ENCODE measurements at regions of chr11 and their contacts with region 1.

Region 1: GRCh38 chr11:1908618-1909017 is 10.9 kb upstream of the TNNT3 start:
- DNase-seq: peak in 1 of 2 donors; percentile 80
- ATAC-seq: peak in 7 of 8 donors; percentile 71 to 90 (median 79)
- H3K4me3 ChIP-seq: peak overlapping the region in 1 of 10 donors; percentile 16
- H3K27ac ChIP-seq: peak overlapping the region; percentile 64 to 88 (median 83)
- H3K4me1 ChIP-seq: peaks cover 3 to 60% (median 49%) of the 10 kb centered on the region in 9 donors
- H3K27me3 ChIP-seq: no peaks in the 10 kb centered on the region
- CTCF ChIP-seq: no peak

Region 2: GRCh38 chr11:1619449-1619848 is 289.2 kb before region 1 on chr11:
- intact Hi-C with region 1: no loop called
- DNase-seq: no peak
- ATAC-seq: peak in 3 of 8 donors; percentile 47 to 81 (median 69)
- H3K4me3 ChIP-seq: no peak overlapping the region
- H3K27ac ChIP-seq: no peak overlapping the region
- H3K4me1 ChIP-seq: no peaks in the 10 kb centered on the region
- H3K27me3 ChIP-seq: peaks cover 0 to 34% (median 20%) of the 10 kb centered on the region in 7 donors
- CTCF ChIP-seq: no peak

Region 3: GRCh38 chr11:1931341-1932099 is 22.9 kb after region 1 on chr11:
- intact Hi-C with region 1: loop called in 4 of 10 experiments (anchors 2 kb)
- DNase-seq: peak in 1 of 2 donors; percentile 58
- ATAC-seq: peak in 7 of 8 donors; percentile 22 to 36 (median 27)
- H3K4me3 ChIP-seq: no peak overlapping the region
- H3K27ac ChIP-seq: peak overlapping the region; percentile 17 to 79 (median 64)
- H3K4me1 ChIP-seq: peaks cover 5 to 46% (median 19%) of the 10 kb centered on the region in 9 donors
- H3K27me3 ChIP-seq: no peaks in the 10 kb centered on the region
- CTCF ChIP-seq: no peak

Region 4: GRCh38 chr11:1936776-1937615 is 28.4 kb after region 1 on chr11:
- intact Hi-C with region 1: loop called in 3 of 10 experiments (anchors 1 to 2 kb)
- DNase-seq: peak in 1 of 2 donors; percentile 11
- ATAC-seq: peak in 1 of 8 donors; percentile 10
- H3K4me3 ChIP-seq: no peak overlapping the region
- H3K27ac ChIP-seq: peak overlapping the region in 1 of 10 donors; percentile 26
- H3K4me1 ChIP-seq: peaks cover 4 to 18% (median 14%) of the 10 kb centered on the region in 9 donors
- H3K27me3 ChIP-seq: no peaks in the 10 kb centered on the region
- CTCF ChIP-seq: no peak

Region 5: DNA sequence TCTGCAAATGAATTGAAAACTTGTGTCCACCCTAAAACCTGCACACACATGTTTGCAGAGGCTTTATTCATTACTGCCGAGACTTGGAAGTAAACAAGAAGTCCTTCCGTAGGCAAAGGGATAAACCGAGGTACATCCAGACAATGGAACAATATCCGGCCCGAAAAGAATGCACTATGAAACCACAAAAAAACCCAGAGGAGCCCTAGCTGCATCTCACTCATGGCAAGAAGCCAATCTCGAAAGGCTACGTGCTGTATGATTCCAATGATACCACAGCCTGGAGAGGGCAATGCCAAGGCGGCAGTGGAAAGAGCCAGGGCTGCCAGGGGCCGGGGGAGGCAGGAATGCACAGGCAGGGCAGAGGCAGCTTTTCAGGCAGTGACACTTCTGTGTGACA is 35.4 kb after region 1 on chr11:
- intact Hi-C with region 1: loop called in 2 of 10 experiments (anchors 1 kb)
- DNase-seq: no peak
- ATAC-seq: no peak
- H3K4me3 ChIP-seq: no peak overlapping the region
- H3K27ac ChIP-seq: peak overlapping the region in 7 of 10 donors; percentile 6 to 55 (median 35)
- H3K4me1 ChIP-seq: peaks cover 0 to 19% (median 7%) of the 10 kb centered on the region in 9 donors
- H3K27me3 ChIP-seq: no peaks in the 10 kb centered on the region
- CTCF ChIP-seq: no peak